Activated B cell treated with CpG ODN at 0.5 μM for 24 hours (primary cell): ENCODE measurements at regions of chr18 and their contacts with region 1.

Region 1: GRCh38 chr18:3803028-3803749 is 353.2 kb downstream of the TGIF1 start:
- DNase-seq: no peak
- ATAC-seq: no peak
- H3K4me3 Mint-ChIP-seq: no peak overlapping the region
- H3K27ac Mint-ChIP-seq: no peak overlapping the region
- H3K4me1 Mint-ChIP-seq: no peaks in the 10 kb centered on the region
- H3K27me3 Mint-ChIP-seq: peaks cover 2% of the 10 kb centered on the region
- CTCF ChIP-seq: no peak

Region 2: GRCh38 chr18:3852321-3852720 is 49.1 kb after region 1 on chr18:
- CTCF ChIA-PET with region 1: no interaction called
- POLR2A ChIA-PET with region 1: no interaction called
- intact Hi-C with region 1: loop called (anchors 5 kb)
- DNase-seq: no peak
- ATAC-seq: no peak
- H3K4me3 Mint-ChIP-seq: no peak overlapping the region
- H3K27ac Mint-ChIP-seq: no peak overlapping the region
- H3K4me1 Mint-ChIP-seq: no peaks in the 10 kb centered on the region
- H3K27me3 Mint-ChIP-seq: no peaks in the 10 kb centered on the region
- CTCF ChIP-seq: no peak

Region 3: GRCh38 chr18:3889803-3890202 is 86.6 kb after region 1 on chr18:
- CTCF ChIA-PET with region 1: no interaction called
- POLR2A ChIA-PET with region 1: no interaction called
- intact Hi-C with region 1: no loop called
- DNase-seq: no peak
- ATAC-seq: no peak
- H3K4me3 Mint-ChIP-seq: no peak overlapping the region
- H3K27ac Mint-ChIP-seq: no peak overlapping the region
- H3K4me1 Mint-ChIP-seq: no peaks in the 10 kb centered on the region
- H3K27me3 Mint-ChIP-seq: peaks cover 6% of the 10 kb centered on the region
- CTCF ChIP-seq: no peak